Sciatic nerve (tissue), 2 donors: ENCODE measurements at regions of chr11 and their contacts with region 1.

Region 1: GRCh38 chr11:22389526-22390282 is 51.5 kb downstream of the SLC17A6 start:
- DNase-seq: no peak
- ATAC-seq: no peak

Region 2: GRCh38 chr11:22371160-22371559 is 18.5 kb before region 1 on chr11:
- intact Hi-C with region 1: loop called (anchors 1 kb)
- DNase-seq: no peak
- ATAC-seq: no peak